Tibial artery (tissue), 4 donors: ENCODE measurements at regions of chr20 and their contacts with region 1.

Region 1: GRCh38 chr20:36199345-36200257 is 36.7 kb upstream of the AAR2 start:
- DNase-seq: peak; percentile 80 to 85
- H3K4me3 ChIP-seq: no peak overlapping the region
- H3K27ac ChIP-seq: no peak overlapping the region
- H3K4me1 ChIP-seq: no peaks in the 10 kb centered on the region
- H3K27me3 ChIP-seq: no peaks in the 10 kb centered on the region
- CTCF ChIP-seq: peak; percentile 84 to 93

Region 2: DNA sequence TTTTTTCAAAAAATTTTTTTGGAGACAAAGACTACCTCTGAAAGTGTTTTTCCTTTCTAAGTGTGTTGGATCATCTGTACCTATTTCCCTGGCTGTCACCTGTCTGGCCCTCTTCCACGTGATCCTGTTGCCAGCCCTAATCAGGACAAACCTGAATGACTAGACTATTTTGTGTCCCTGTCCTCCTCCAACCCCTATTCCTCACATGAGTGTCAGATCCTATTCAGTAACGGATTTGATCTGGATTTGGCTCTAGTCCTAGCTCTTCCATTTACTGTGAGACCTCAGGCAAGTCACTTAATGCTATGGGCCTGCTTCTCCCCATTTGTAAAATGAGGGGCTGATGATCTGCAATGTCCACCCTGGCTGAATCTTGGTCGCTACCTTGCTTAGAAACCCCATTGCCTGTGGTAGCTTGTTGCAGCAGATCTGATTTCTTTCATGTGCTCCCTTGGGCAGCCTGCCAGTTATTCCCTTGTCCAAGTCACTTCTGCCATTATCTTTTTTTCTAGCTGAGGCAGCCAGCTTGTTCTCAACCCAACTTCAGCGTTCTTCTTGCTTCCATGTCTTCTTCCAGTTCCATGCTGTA is 423.0 kb before region 1 on chr20:
- intact Hi-C with region 1: no loop called
- DNase-seq: peak; percentile 75 to 80
- H3K4me3 ChIP-seq: no peak overlapping the region
- H3K27ac ChIP-seq: no peak overlapping the region
- H3K4me1 ChIP-seq: peaks cover 0 to 41% (median 26%) of the 10 kb centered on the region in 4 donors
- H3K27me3 ChIP-seq: no peaks in the 10 kb centered on the region
- CTCF ChIP-seq: no peak

Region 3: DNA sequence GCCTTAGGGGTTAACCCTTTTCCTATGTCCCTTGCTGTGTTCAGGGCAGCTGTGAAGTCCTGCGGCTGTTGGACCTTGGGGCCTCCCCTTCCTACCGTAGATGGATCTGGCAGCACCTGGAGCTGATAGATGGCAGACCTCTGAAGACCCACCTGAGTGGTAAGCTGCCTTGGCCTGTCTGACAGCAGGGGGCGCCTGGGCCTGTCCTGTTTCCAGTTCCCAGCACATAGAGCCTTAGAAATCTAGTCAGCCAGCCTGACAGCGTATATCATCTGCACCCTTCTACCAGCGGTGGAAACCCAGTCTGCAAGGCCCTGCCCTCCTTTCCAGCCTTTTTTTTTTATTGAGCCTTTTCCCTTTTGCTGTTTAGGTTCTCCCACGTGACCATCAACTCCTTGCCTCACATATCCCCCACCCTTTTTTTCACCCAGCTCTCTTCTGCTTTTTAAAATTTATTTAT is 204.6 kb before region 1 on chr20:
- intact Hi-C with region 1: loop called (anchors 5 kb)
- DNase-seq: peak; percentile 79 to 83
- H3K4me3 ChIP-seq: no peak overlapping the region
- H3K27ac ChIP-seq: no peak overlapping the region
- H3K4me1 ChIP-seq: peaks cover 0 to 5% (median 2%) of the 10 kb centered on the region in 4 donors
- H3K27me3 ChIP-seq: no peaks in the 10 kb centered on the region
- CTCF ChIP-seq: peak; percentile 86 to 87

Region 4: GRCh38 chr20:36085686-36086267 is 113.8 kb before region 1 on chr20:
- intact Hi-C with region 1: no loop called
- DNase-seq: no peak
- H3K4me3 ChIP-seq: no peak overlapping the region
- H3K27ac ChIP-seq: no peak overlapping the region
- H3K4me1 ChIP-seq: no peaks in the 10 kb centered on the region
- H3K27me3 ChIP-seq: no peaks in the 10 kb centered on the region
- CTCF ChIP-seq: no peak

Region 5: DNA sequence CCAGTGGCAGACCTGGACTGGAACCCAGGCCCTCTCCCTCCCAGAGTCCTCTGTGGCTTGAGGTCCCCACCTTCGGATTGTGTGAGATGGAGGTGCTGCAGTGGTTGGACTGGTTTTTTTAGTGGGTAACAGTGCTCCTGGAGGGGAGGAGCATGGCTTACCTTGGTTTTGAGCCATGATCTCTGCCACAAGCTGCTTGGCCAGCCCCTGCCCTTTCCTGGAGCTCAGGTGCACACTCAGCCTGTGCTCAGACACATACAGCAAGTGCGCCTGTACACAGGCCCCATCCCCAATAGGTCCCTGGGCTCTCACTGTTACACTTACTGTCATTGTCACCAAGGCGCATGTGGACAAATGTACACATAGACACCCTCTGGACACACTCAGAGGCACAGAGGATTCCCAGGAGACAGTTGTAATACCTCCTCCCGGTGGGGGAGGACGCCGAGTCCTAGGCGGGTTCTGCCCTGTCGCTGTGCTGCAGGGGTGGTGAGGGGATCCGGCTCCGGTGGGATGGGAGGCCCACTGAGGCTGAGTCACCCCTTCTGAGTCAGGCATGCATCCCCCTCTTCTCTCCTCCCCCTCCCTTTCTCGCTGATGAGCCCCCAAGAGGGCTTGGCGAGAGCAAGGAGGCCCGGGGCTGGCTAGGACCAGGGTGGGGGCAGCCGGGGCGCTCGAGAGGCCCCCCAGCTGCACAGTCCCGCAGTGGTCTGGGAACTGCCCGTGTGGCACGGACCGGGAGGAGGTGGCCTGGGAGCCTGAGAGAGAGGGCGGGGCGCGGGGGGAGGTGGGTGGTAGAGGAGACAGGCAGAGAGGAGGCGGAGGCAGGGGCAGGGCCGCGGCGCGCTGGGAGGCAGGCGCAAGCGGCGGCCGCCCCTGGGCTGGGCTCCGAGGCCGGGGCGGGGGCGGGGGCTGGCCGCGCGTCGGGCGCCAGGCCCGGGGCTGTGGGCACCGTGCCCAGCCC is 45.6 kb before region 1 on chr20:
- intact Hi-C with region 1: loop called (anchors 2 kb)
- DNase-seq: peak; percentile 86 to 95
- H3K4me3 ChIP-seq: peak overlapping the region; percentile 69 to 76
- H3K27ac ChIP-seq: peak overlapping the region; percentile 75 to 77
- H3K4me1 ChIP-seq: peaks cover 0 to 47% (median 42%) of the 10 kb centered on the region in 4 donors
- H3K27me3 ChIP-seq: no peaks in the 10 kb centered on the region
- CTCF ChIP-seq: no peak

Region 6: GRCh38 chr20:36248836-36249235 is 49.2 kb after region 1 on chr20:
- intact Hi-C with region 1: no loop called
- DNase-seq: no peak
- H3K4me3 ChIP-seq: no peak overlapping the region
- H3K27ac ChIP-seq: no peak overlapping the region
- H3K4me1 ChIP-seq: no peaks in the 10 kb centered on the region
- H3K27me3 ChIP-seq: no peaks in the 10 kb centered on the region
- CTCF ChIP-seq: no peak

Region 7: GRCh38 chr20:36439040-36439730 is 239.6 kb after region 1 on chr20:
- intact Hi-C with region 1: loop called (anchors 5 kb)
- DNase-seq: peak; percentile 57 to 76
- H3K4me3 ChIP-seq: no peak overlapping the region
- H3K27ac ChIP-seq: no peak overlapping the region
- H3K4me1 ChIP-seq: peaks cover 0 to 10% (median 6%) of the 10 kb centered on the region in 4 donors
- H3K27me3 ChIP-seq: peaks cover 0 to 36% of the 10 kb centered on the region in 2 donors
- CTCF ChIP-seq: peak; percentile 74 to 87

Region 8: DNA sequence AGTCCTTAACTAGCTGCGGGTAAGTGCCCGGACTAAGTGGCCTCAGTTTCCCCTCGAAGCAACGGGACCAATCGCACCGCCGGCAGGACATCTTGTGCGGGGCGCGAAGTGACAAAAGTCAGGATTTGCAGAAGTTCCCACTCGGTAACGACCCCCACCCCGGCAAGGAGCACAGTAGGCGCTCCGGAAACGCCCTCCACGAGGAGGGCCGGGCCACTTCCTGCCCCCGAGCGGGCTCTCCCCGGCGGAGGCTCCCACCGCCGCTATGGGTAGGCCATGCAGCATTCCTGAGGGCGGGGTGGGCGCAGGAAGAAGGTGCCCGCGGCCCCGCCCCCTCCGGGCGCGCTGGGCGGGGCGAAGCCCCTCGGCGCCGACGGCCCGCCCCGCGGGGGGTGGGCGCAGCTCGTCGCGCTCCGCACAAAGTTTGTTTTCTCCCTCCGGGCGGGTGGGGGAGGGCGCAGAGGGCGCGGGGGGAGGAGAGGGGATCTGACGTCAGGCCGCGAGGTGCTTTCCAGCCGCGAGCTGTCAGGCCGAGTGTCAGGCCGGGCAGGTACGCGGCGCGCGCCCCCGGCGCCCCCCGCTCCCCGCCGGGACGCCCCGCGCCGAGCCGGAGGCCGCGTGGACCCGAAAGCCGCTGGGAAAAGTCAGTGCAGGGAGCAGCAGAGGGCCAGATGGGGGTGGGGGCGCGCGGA is 373.6 kb after region 1 on chr20 and contains the start of gene TGIF2:
- intact Hi-C with region 1: no loop called
- DNase-seq: peak; percentile 70 to 92
- H3K4me3 ChIP-seq: peak within 1 kb of the TSS; percentile 80 to 90
- H3K27ac ChIP-seq: peak within 1 kb of the TSS; percentile 88 to 91
- H3K4me1 ChIP-seq: peaks cover 0 to 29% (median 20%) of the 10 kb centered on the region in 4 donors
- H3K27me3 ChIP-seq: no peaks in the 10 kb centered on the region
- CTCF ChIP-seq: no peak